RWPE1 (cell line): ENCODE measurements at regions of chrX and their contacts with region 1.

Region 1: DNA sequence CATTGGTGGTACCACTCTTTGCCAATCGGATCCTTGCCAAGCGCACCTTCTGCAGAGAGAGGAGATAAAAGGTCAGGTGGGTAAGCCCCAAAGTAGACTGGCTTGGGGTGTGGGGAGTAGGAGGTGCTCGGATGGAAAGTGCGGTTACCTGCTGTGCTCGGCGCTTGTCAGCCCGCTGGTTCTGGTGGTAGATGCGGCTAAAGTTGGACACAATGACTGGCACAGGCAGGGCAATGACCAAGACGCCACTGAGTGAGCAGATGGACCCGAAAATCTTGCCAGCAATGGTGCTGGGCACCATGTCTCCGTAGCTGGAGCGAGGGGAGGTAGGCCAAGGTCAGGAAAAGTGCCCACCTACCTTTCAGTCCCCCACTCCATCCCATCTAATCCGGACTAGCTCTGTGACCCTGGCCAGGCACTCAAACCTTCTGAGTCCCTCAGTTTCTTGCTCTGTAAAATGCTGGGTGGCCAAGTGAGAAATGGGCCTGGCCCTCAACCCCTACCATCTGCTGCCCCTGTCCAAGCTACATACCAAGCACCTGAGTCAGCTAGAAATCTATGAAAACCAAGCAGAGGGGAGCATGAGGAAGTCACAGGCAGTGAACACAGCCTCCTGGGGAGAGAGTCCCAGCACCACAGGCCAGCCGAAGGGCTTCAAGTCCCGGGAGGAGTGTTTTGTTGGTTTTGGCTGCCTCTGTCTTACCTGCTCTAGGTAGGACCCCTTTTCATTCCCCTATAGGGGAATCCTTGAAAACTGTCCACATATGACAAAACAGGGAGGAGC is 4.7 kb downstream of the KCND1 start:
- DNase-seq: no peak
- H3K27ac ChIP-seq: no peak overlapping the region
- CTCF ChIP-seq: no peak

Region 2: GRCh38 chrX:49163555-49164419 is 196.8 kb after region 1 on chrX:
- CTCF ChIA-PET with region 1: no interaction called
- POLR2A ChIA-PET with region 1: interaction called, 15 read pairs
- DNase-seq: peak; percentile 66
- H3K27ac ChIP-seq: peak overlapping the region; percentile 100
- CTCF ChIP-seq: peak; percentile 78

Region 3: GRCh38 chrX:50100188-50100587 is 1133.2 kb after region 1 on chrX:
- CTCF ChIA-PET with region 1: no interaction called
- POLR2A ChIA-PET with region 1: no interaction called
- DNase-seq: peak; percentile 4
- H3K27ac ChIP-seq: no peak overlapping the region
- CTCF ChIP-seq: no peak